ENCODE measurements at regions of chr22 and their contacts with region 1.

Region 1: GRCh38 chr22:40044102-40044869 is 49.5 kb downstream of the FAM83F start:
- H3K4me3 ChIP-seq: peak overlapping the region; percentile 99
- H3K27ac ChIP-seq: peak overlapping the region; percentile 72
- H3K4me1 ChIP-seq: peaks cover 20% of the 10 kb centered on the region
- CTCF ChIP-seq: no peak

Region 2: DNA sequence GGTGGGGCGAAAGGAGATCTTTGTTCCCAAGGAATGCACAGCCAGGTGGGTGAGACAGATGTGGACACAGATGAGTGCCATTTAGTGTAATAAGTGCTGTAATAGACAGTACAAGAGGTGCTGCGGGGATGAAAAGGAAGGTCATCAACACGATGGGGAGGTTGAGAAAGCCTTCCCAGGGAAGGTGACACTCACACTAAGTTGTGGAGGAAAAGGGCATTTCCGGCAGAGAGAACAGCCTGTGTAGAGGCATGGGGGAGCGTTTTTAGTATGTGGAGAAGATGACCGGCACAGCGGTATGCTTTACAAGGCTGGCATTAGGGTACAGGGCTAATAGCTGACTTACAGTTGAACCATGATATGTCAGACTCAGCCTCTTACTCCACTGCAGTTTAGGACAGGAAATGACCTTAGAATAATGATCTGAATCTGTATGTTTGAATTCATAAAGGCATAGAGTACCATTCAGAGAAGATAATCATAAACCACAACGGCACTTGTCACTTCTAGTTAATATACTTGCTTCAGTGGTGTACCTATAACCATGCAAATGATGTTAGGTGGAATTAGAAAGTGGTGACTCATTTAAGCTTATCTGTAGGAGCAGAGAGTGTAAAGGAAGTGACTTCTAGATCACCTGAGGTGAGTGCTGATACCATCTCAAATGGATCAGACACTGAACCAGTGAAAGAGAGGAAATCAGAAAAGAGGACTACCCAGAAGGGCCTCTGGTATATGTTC is 11.0 kb after region 1 on chr22:
- CTCF ChIA-PET with region 1: interaction called, 6 read pairs
- POLR2A ChIA-PET with region 1: interaction called, 19 read pairs
- H3K4me3 ChIP-seq: no peak overlapping the region
- H3K27ac ChIP-seq: no peak overlapping the region
- H3K4me1 ChIP-seq: peaks cover 19% of the 10 kb centered on the region
- CTCF ChIP-seq: no peak

Region 3: GRCh38 chr22:40137132-40137531 is 92.8 kb after region 1 on chr22:
- CTCF ChIA-PET with region 1: no interaction called
- POLR2A ChIA-PET with region 1: interaction called, 10 read pairs
- H3K4me3 ChIP-seq: no peak overlapping the region
- H3K27ac ChIP-seq: no peak overlapping the region
- H3K4me1 ChIP-seq: no peaks in the 10 kb centered on the region
- CTCF ChIP-seq: no peak

Region 4: DNA sequence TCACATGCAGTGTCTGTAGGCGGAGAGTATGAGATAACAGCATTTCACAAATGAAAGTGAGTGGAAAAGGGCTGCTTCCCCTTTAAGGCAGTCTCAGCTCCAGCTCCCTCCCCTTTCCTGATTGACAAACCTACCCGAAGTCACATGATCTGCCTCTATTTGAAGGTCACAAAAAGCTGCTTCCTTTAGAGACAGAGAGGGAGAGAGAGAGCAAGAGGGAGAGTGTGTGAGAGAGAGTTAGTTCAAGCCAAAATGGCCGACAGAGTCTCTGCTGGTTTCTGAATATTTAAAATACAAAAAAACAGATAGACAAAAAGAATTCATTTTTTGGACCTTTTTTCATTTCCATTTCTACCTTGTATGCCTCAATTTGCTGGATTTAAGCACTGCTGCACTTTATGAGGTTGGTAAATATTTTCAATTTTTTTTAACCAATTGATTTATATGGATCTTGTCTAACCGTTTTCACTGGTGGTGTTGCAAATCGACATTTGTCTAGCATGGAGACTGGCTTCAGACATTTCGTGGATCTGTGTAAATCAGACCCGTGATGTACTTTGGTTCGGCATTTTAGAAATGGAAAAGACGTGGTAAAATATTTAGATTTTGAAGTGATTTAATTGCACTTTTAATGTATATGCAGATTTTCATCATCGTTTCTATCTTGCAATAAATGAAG is 133.6 kb after region 1 on chr22 and contains the start of gene TNRC6B:
- CTCF ChIA-PET with region 1: interaction called, 6 read pairs
- POLR2A ChIA-PET with region 1: interaction called, 72 read pairs
- H3K4me3 ChIP-seq: peak within 1 kb of the TSS; percentile 76
- H3K27ac ChIP-seq: peak within 1 kb of the TSS; percentile 73
- H3K4me1 ChIP-seq: peaks cover 23% of the 10 kb centered on the region
- CTCF ChIP-seq: no peak